ENCODE measurements at regions of chr10 and their contacts with region 1.

Region 1: GRCh38 chr10:69644658-69645295 is 14.7 kb downstream of the FAM241B start:
- DNase-seq: peak; percentile 49
- H3K4me3 Mint-ChIP-seq: no peak overlapping the region
- H3K27ac Mint-ChIP-seq: no peak overlapping the region
- H3K4me1 Mint-ChIP-seq: peaks cover 2% of the 10 kb centered on the region
- H3K27me3 Mint-ChIP-seq: no peaks in the 10 kb centered on the region

Region 2: DNA sequence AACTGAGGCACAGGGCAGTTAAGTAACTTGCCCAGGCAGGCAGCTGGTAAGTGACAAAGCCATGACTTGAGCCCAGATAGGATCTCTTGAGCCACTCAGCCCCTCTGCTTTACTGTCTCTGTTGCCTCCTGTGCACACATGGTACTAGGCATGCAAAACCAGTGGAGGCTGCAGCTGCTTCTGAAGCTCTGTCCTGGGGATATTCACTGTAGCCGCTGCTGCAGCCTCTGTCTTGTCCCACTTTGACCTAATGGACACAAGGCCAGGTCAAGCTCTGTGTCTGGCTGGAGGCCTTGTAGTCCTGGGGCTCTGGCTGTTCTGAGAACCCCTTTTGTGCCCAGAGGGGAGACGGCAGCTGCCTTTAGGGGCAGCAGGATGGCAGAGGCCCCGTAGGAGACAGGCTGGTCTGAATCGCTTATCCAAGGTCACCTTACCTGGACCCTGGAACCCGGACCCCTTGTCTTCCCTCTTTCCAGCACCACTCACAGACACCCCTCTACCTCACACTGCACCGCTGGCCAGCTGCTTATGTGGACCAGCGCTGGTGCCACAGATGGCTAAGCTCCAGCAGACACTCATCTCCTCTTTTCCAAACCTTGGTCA is 135.9 kb before region 1 on chr10:
- CTCF ChIA-PET with region 1: interaction called, 10 read pairs
- POLR2A ChIA-PET with region 1: no interaction called
- DNase-seq: no peak
- H3K4me3 Mint-ChIP-seq: no peak overlapping the region
- H3K27ac Mint-ChIP-seq: no peak overlapping the region
- H3K4me1 Mint-ChIP-seq: peaks cover 13% of the 10 kb centered on the region
- H3K27me3 Mint-ChIP-seq: peaks cover 32% of the 10 kb centered on the region

Region 3: DNA sequence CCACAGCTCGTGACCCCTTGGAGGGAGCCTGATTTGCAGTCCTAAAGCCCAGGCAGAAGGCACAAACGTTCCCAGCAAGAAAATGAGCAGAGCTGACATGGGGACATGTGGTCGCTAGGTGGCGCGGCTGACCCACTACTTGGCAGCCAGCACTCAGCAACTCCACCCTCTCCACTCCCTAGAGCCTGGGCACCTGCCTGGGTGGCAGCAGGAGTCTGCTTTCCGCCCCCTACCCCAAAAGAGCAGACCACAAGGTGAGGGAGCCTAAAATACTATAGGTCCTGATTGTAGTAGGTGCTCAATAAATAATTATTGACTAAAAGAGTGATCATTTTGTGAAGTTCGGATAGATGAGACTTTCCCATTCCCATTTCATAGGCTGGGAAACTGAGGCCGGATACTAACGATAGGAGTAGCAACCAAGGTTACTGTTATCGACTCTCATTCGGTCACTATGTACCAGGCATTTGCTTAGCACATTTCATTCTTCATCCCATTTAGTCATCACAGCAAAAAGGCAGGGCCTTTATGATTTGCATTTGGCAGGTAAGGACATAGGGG is 129.0 kb before region 1 on chr10:
- CTCF ChIA-PET with region 1: interaction called, 18 read pairs
- POLR2A ChIA-PET with region 1: no interaction called
- DNase-seq: peak; percentile 83
- H3K4me3 Mint-ChIP-seq: no peak overlapping the region
- H3K27ac Mint-ChIP-seq: no peak overlapping the region
- H3K4me1 Mint-ChIP-seq: no peaks in the 10 kb centered on the region
- H3K27me3 Mint-ChIP-seq: peaks cover 34% of the 10 kb centered on the region

Region 4: GRCh38 chr10:69620625-69621024 is 24.2 kb before region 1 on chr10:
- CTCF ChIA-PET with region 1: no interaction called
- POLR2A ChIA-PET with region 1: no interaction called
- DNase-seq: no peak
- H3K4me3 Mint-ChIP-seq: no peak overlapping the region
- H3K27ac Mint-ChIP-seq: no peak overlapping the region
- H3K4me1 Mint-ChIP-seq: peaks cover 32% of the 10 kb centered on the region
- H3K27me3 Mint-ChIP-seq: no peaks in the 10 kb centered on the region

Region 5: DNA sequence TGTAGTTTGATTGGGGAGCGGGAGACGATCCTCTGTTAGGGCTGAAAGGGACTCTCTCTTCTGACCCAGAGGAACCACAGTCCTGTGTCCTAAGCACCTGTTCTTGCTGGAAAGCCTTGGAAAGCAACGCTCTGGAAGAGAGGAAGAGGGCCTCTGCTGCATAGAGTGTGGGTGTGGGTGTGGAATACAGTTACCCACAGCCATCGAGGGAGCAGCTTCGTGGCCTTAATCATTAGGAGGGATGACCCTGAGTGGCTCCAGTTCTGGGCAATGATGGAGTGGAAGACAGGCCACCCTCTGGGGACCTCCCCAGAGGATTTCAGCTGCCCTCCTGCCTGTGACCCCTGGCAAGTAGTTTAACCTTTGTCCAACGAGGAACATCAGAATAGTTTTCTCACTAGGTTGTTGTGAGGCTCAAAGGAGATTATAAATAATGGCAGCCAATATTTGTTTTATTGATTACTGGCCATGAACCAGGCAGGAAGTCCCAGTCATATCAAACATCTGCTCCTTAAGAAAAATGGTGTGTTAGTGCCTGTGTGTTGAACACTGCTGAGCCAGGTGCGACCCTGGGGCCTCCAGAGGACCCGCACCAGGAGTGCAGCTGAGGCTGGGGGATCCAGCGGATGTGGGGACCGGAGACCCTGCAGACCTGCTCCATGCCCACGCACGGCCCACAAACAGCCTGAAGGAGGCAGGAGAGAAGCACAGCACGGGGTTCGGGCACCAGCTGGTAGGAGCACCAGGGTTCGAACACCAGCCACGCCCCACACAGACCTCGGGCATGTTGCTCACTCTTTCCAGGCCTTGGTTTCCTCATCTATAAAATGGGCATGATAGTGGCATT is 20.9 kb after region 1 on chr10:
- CTCF ChIA-PET with region 1: no interaction called
- POLR2A ChIA-PET with region 1: no interaction called
- DNase-seq: no peak
- H3K4me3 Mint-ChIP-seq: no peak overlapping the region
- H3K27ac Mint-ChIP-seq: no peak overlapping the region
- H3K4me1 Mint-ChIP-seq: peaks cover 4% of the 10 kb centered on the region
- H3K27me3 Mint-ChIP-seq: peaks cover 2% of the 10 kb centered on the region

Region 6: DNA sequence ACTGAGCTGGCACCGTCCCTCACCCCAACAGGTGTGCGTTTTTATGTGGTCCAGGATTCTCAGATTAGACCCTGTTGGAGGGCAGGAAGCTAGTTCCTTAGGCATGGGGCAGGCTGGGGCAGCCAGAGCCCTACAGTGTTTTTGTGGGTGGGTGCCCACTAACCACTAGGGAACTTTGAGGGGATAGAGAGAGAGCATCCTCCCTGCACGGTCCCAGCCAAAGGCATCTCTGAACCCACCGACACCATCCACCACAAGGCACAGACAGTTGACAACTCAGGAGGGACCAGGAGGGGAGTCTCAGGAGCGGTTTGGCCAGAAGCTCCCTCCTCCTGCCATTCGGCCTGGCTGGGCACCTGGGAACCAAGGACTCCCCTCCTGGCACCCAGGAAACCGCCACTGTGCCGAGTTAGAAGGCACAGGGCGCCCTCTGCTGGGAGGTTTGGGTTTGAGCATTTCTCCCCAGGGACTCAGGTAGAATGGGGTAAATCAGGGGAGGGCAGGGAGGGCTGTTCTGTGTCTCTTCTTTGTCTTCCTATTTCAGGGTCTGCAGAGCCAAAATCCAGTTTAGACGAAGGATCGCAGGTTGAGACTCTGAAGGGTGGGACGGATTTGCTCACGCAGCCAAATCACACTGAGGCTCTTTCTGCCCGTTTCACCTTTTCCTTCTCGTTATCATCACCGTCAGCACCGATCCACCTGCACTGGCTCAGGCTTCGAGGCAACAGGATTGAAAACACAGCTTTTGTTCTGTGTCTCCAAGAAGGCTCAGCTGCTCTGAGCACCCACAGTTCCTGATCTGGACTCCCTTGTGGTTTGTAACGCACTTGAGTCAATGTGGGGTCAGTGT is 72.2 kb after region 1 on chr10:
- CTCF ChIA-PET with region 1: interaction called, 15 read pairs
- POLR2A ChIA-PET with region 1: no interaction called
- DNase-seq: peak; percentile 68
- H3K4me3 Mint-ChIP-seq: no peak overlapping the region
- H3K27ac Mint-ChIP-seq: no peak overlapping the region
- H3K4me1 Mint-ChIP-seq: no peaks in the 10 kb centered on the region
- H3K27me3 Mint-ChIP-seq: peaks cover 2% of the 10 kb centered on the region

Measured in activated CD4-positive, alpha-beta T cell treated with anti-CD3 and anti-CD28 coated beads, Interleukin-2, amount 10 ng/mL, durations not matched to agents 7 days and 5 days (primary cell).